HEK293T (cell line): ENCODE measurements at regions of chr7 and their contacts with region 1.

Region 1: DNA sequence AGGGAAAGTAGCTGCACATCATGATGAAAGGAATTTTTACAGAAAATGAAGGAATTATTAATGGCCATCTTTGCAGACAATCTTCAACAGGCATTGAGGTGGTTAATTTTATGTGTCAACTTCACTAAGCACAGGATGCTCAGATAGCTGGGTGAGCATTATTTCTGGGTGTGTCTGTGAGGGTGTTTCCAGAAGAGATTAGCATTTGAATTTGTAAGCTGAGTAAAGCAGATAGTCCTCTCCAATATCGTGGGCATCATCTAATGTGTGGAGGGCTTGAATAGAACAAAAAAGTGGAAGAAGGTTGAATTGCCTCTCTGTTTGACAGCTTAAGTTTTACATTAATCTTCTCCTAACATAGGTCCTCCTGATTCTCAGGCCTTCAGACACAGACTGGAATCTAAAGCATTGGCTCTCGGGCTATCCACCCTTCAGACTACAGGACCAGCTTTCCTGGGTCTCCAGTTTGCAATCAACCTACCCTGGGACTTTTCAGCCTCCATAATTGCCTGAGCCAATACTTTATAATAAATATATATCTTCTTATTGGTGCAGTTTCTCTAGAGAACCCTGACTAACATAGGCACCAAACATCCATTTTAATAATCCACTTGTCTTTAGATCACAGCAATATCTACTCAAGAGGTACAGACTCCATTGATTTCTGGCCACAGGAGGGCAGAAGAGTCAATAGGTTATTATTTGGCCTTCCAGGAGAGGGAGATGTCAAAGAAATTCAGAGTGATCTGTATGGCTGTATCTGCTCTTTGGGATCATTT is 10.5 kb upstream of the CRPPA start:
- DNase-seq: peak; percentile 28

Region 2: GRCh38 chr7:16242920-16243319 is 188.9 kb before region 1 on chr7:
- CTCF ChIA-PET with region 1: no interaction called
- POLR2A ChIA-PET with region 1: no interaction called
- DNase-seq: no peak

Region 3: GRCh38 chr7:16465469-16466361 is 33.9 kb after region 1 on chr7 and contains the start of gene SOSTDC1:
- CTCF ChIA-PET with region 1: no interaction called
- POLR2A ChIA-PET with region 1: no interaction called
- DNase-seq: peak; percentile 31

Region 4: DNA sequence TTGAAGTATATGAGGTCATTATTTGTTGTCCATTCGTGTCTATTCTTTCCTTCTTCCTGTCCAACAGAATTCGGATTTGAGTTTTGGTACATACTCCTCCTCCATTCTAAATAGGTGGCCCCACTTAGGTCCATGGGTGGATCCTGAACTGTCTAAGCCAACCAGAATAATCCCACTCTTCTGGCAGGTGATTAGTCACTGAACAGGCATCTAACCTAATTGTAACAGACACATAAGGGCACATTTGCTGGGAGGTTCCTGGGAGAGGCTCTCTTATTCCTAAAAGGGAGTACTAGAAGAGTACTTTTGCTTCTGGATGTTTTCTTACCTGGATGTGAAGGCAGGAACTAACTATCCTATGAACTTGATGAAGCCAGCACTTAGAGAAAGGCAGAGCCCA is 111.6 kb after region 1 on chr7:
- CTCF ChIA-PET with region 1: no interaction called
- POLR2A ChIA-PET with region 1: no interaction called
- DNase-seq: no peak

Region 5: GRCh38 chr7:16564909-16565426 is 133.1 kb after region 1 on chr7:
- CTCF ChIA-PET with region 1: interaction called, 15 read pairs
- POLR2A ChIA-PET with region 1: no interaction called
- DNase-seq: peak; percentile 53